Left ventricle myocardium inferior (tissue), 1 donor: ENCODE measurements at regions of chr6 and their contacts with region 1.

Region 1: GRCh38 chr6:53794720-53795253 is at the start of gene LRRC1:
- DNase-seq: peak; percentile 92
- H3K4me3 ChIP-seq: peak within 1 kb of the TSS; percentile 88
- H3K27ac ChIP-seq: peak within 1 kb of the TSS; percentile 83
- H3K4me1 ChIP-seq: peaks cover 37% of the 10 kb centered on the region
- H3K27me3 ChIP-seq: no peaks in the 10 kb centered on the region
- CTCF ChIP-seq: no peak
- total RNA-seq, gene LRRC1: 2.7 TPM

Region 2: GRCh38 chr6:53926525-53926924 is 131.7 kb after region 1 on chr6:
- intact Hi-C with region 1: loop called (anchors 10 kb)
- DNase-seq: no peak
- H3K4me3 ChIP-seq: no peak overlapping the region
- H3K27ac ChIP-seq: peak overlapping the region; percentile 57
- H3K4me1 ChIP-seq: peaks cover 39% of the 10 kb centered on the region
- H3K27me3 ChIP-seq: no peaks in the 10 kb centered on the region
- CTCF ChIP-seq: no peak

Region 3: DNA sequence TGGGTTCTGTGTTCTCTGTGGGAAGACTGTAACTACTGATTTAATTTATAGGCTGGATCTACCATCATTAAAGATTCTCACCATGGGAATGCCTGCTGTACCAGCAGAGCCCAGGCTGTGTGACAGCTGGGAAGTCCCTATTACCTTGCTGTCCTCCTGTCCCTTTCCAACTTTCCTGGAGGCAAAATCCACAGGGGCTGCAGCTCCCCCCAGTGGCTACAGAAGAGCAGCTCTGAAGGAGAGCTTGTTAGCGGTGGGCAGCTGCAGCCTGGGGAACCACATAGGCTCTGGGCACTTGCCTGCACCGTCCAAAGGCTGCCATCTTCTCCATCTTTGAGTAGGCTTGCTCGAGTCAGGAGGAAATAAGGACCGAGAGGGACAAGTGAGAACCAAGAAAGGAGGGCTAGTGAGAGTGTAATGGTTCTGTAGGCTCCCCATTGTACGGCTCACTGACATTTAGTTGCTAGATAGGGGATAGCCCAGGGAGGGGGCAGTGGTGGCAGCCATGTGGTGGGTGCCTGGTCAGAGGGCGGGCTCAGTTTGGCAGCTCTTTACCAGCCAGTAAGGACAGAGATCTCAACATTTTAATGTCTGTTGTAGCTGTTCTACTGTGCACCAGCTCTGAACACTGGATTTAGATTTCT is 161.4 kb after region 1 on chr6:
- intact Hi-C with region 1: loop called (anchors 10 kb)
- DNase-seq: peak; percentile 60
- H3K4me3 ChIP-seq: no peak overlapping the region
- H3K27ac ChIP-seq: no peak overlapping the region
- H3K4me1 ChIP-seq: no peaks in the 10 kb centered on the region
- H3K27me3 ChIP-seq: peaks cover 4% of the 10 kb centered on the region
- CTCF ChIP-seq: peak; percentile 80